Activated naive CD4-positive, alpha-beta T cell treated with anti-CD3 and anti-CD28 coated beads for 36 hours (primary cell): ENCODE measurements at regions of chr4 and their contacts with region 1.

Region 1: GRCh38 chr4:77586951-77587383 is 18.7 kb upstream of the CXCL13 start:
- DNase-seq: peak; percentile 87
- H3K4me3 Mint-ChIP-seq: peak overlapping the region; percentile 17
- H3K27ac Mint-ChIP-seq: peak overlapping the region; percentile 80
- H3K4me1 Mint-ChIP-seq: peaks cover 49% of the 10 kb centered on the region
- H3K27me3 Mint-ChIP-seq: peaks cover 15% of the 10 kb centered on the region

Region 2: GRCh38 chr4:76407440-76408119 is 1179.4 kb before region 1 on chr4:
- CTCF ChIA-PET with region 1: no interaction called
- intact Hi-C with region 1: loop called (anchors 5 kb)
- DNase-seq: no peak
- H3K4me3 Mint-ChIP-seq: no peak overlapping the region
- H3K27ac Mint-ChIP-seq: no peak overlapping the region
- H3K4me1 Mint-ChIP-seq: peaks cover 4% of the 10 kb centered on the region
- H3K27me3 Mint-ChIP-seq: peaks cover 7% of the 10 kb centered on the region

Region 3: DNA sequence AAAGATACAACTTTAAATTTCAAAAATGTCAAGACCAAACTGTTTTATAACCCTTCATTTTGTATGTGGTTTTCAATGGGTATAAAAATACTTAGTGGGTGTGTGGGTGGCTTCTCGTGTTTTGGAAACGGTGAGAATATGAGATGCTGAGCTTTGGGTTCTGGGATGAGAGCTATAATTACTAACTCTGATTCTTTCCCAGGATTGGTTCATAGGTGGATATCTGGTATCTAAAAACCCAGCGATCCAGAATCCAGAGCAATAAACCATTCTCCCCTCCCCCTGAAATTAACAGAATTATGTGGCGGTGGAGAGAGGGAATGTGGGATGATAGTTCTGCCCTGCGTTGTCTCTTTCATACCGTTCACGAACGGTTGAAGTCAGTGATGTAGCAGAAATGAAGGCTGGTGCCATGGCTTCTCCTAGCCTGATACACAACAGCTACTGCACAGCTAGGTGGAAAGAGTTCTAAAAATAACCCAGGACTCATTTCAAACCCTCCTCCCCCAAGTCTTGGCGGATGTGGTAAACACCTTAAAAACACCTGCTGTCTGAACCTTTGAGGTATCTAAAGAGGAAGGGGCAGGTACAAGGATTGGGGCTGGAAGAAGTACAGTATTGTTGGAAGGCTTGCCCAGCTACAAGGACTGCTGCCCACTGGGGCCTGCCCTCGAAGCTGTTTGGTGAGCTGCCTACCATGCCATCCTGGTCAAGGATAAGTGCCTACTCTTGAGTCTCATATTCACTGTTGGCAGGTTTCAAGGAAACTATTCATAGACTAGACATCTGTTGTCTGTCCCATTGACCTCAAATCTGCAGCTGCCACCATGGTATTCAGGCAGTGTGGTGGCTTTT is 593.0 kb before region 1 on chr4:
- CTCF ChIA-PET with region 1: no interaction called
- intact Hi-C with region 1: loop called (anchors 1 kb)
- DNase-seq: peak; percentile 82
- H3K4me3 Mint-ChIP-seq: peak overlapping the region; percentile 53
- H3K27ac Mint-ChIP-seq: peak overlapping the region; percentile 65
- H3K4me1 Mint-ChIP-seq: peaks cover 57% of the 10 kb centered on the region
- H3K27me3 Mint-ChIP-seq: no peaks in the 10 kb centered on the region

Region 4: DNA sequence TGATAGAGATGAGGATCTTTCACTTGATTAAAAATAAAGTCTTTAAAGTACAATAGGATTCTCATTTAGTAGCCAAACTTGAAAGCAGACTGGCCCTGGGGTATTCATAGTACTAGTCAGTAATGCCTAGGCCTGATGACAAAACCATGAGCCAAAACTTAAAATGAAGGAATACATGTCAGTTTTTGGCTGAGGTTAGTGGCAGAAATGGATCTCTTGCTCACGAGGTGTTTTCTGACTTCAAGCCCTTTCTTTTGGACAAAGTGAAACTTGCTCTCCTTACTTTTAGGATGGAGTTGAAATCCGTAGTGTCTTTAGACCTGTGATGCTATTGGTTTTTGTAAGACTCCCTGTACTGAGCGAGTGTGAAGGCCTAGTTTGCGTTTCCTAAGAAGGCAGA is 272.3 kb before region 1 on chr4:
- CTCF ChIA-PET with region 1: no interaction called
- intact Hi-C with region 1: no loop called
- DNase-seq: no peak
- H3K4me3 Mint-ChIP-seq: no peak overlapping the region
- H3K27ac Mint-ChIP-seq: no peak overlapping the region
- H3K4me1 Mint-ChIP-seq: no peaks in the 10 kb centered on the region
- H3K27me3 Mint-ChIP-seq: peaks cover 4% of the 10 kb centered on the region

Region 5: GRCh38 chr4:77360451-77360850 is 226.5 kb before region 1 on chr4:
- CTCF ChIA-PET with region 1: no interaction called
- intact Hi-C with region 1: no loop called
- DNase-seq: no peak
- H3K4me3 Mint-ChIP-seq: no peak overlapping the region
- H3K27ac Mint-ChIP-seq: no peak overlapping the region
- H3K4me1 Mint-ChIP-seq: no peaks in the 10 kb centered on the region
- H3K27me3 Mint-ChIP-seq: peaks cover 3% of the 10 kb centered on the region

Region 6: DNA sequence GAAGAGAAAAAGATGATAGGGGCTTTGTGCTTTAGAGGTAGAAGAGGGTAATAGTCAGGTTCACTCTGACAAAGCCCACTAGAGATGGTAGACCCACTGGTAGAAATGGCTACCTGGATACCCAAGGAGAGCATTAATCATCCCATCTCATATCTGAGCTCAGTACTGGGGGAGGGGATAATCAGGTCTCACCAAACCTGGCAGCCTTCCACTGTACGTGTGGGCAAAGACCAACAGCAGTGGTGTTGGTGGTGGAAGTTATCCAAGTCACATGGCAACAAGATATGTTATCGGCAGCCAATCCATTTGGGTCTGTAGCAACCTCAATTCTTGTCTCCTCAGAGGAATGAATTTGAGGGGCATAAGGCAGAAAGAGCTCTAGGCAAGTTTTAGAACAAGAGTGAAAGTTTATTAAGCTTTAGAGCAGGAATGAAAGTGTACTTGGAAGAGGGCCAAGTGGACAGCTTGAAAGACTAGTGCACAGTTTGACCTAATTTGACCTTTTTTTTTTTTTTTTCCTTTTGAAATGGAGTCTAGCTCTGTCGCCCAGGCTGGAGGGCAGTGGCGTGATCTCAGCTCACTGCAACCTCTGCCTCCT is 48.3 kb before region 1 on chr4:
- CTCF ChIA-PET with region 1: interaction called, 5 read pairs
- intact Hi-C with region 1: loop called (anchors 1 kb)
- DNase-seq: no peak
- H3K4me3 Mint-ChIP-seq: no peak overlapping the region
- H3K27ac Mint-ChIP-seq: peak overlapping the region; percentile 44
- H3K4me1 Mint-ChIP-seq: peaks cover 14% of the 10 kb centered on the region
- H3K27me3 Mint-ChIP-seq: peaks cover 54% of the 10 kb centered on the region

Region 7: DNA sequence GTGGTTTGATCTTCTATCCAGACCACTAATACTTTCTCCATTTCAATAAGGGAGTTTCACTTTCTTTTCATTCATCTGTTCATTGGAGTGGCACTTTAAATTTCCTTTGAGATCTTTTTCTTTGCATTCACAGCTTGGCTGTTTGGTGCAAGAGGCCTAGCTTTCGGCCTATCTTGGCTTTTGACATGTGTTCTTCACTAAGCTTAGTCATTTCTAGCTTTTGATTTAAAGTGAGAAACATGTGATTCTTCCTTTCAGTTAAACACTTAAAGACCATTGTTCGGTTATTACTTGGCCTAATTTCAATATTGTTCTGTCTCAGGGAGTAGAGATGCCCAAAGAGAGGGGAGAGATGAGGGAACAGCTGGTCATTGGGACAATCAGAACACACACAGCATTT is 42.9 kb after region 1 on chr4:
- CTCF ChIA-PET with region 1: no interaction called
- intact Hi-C with region 1: loop called (anchors 1 kb)
- DNase-seq: peak; percentile 37
- H3K4me3 Mint-ChIP-seq: no peak overlapping the region
- H3K27ac Mint-ChIP-seq: no peak overlapping the region
- H3K4me1 Mint-ChIP-seq: peaks cover 16% of the 10 kb centered on the region
- H3K27me3 Mint-ChIP-seq: no peaks in the 10 kb centered on the region

Region 8: GRCh38 chr4:78542373-78542772 is 955.4 kb after region 1 on chr4:
- CTCF ChIA-PET with region 1: no interaction called
- intact Hi-C with region 1: loop called (anchors 10 kb)
- DNase-seq: no peak
- H3K4me3 Mint-ChIP-seq: no peak overlapping the region
- H3K27ac Mint-ChIP-seq: no peak overlapping the region
- H3K4me1 Mint-ChIP-seq: peaks cover 12% of the 10 kb centered on the region
- H3K27me3 Mint-ChIP-seq: peaks cover 26% of the 10 kb centered on the region

Region 9: GRCh38 chr4:78661921-78662521 is 1075.1 kb after region 1 on chr4:
- CTCF ChIA-PET with region 1: no interaction called
- intact Hi-C with region 1: loop called (anchors 1 kb)
- DNase-seq: peak; percentile 40
- H3K4me3 Mint-ChIP-seq: no peak overlapping the region
- H3K27ac Mint-ChIP-seq: no peak overlapping the region
- H3K4me1 Mint-ChIP-seq: peaks cover 57% of the 10 kb centered on the region
- H3K27me3 Mint-ChIP-seq: no peaks in the 10 kb centered on the region